Right cardiac atrium (tissue), 5 donors: ENCODE measurements at regions of chr20 and their contacts with region 1.

Region 1: GRCh38 chr20:43749734-43750294 is 23.0 kb upstream of the GTSF1L start:
- DNase-seq: peak; percentile 72 to 90 (median 90)
- ATAC-seq: peak; percentile 78 to 85
- H3K4me3 ChIP-seq: no peak overlapping the region
- H3K27ac ChIP-seq: no peak overlapping the region
- H3K4me1 ChIP-seq: no peaks in the 10 kb centered on the region
- H3K27me3 ChIP-seq: no peaks in the 10 kb centered on the region

Region 2: DNA sequence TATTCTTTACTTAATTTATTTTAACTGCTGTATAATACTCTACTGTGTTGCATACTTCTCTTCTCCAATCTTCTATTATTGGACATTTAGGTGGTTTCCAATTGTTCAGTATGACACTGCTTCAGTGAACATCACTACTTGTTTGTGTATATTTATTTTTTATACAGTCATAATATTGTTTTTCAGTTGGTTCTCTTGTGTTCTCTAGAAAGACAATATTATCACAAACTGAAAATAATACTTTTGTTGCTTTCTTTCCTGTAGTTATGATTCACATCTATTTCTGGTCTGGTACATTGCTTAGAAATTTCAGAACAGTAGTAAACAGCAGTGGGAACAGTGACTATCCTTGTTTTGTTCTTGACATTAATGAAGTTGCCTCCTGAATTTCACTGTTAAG is 39.8 kb after region 1 on chr20:
- intact Hi-C with region 1: no loop called
- DNase-seq: no peak
- ATAC-seq: no peak
- H3K4me3 ChIP-seq: no peak overlapping the region
- H3K27ac ChIP-seq: no peak overlapping the region
- H3K4me1 ChIP-seq: no peaks in the 10 kb centered on the region
- H3K27me3 ChIP-seq: no peaks in the 10 kb centered on the region

Region 3: GRCh38 chr20:43839793-43840199 is 90.0 kb after region 1 on chr20:
- intact Hi-C with region 1: loop called in 1 of 4 experiments (anchors 10 kb)
- DNase-seq: no peak
- ATAC-seq: no peak
- H3K4me3 ChIP-seq: no peak overlapping the region
- H3K27ac ChIP-seq: no peak overlapping the region
- H3K4me1 ChIP-seq: no peaks in the 10 kb centered on the region
- H3K27me3 ChIP-seq: no peaks in the 10 kb centered on the region

Region 4: DNA sequence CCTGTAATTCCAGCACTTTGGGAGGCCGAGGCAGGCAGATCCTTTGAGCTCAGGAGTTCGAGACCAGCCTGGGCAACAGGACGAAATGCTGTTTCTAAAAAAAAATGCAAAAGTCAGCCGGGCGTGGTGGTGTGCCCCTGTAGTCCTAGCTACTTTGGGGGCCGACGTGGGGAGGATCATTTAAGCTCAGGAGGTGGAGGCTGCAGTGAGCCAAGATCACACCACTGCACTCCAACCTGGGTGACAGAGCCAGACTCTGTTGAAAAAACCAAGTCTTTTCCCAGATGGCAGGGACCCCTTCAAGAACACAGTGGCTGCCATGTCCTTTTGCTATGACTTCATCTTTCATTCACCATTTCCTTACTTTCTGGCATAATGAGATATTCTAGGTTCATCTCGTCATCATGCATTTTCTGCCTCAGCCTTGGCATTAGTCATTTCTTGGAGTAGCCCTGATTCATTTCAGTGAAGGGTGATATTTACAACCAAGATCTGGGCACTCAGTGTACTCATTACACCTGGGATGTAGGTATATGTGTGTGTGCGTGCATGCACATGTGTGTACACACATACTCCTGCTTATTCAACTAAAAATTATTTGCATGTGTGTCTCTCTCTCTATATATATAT is 103.5 kb after region 1 on chr20:
- intact Hi-C with region 1: no loop called
- DNase-seq: no peak
- ATAC-seq: no peak
- H3K4me3 ChIP-seq: no peak overlapping the region
- H3K27ac ChIP-seq: no peak overlapping the region
- H3K4me1 ChIP-seq: no peaks in the 10 kb centered on the region
- H3K27me3 ChIP-seq: no peaks in the 10 kb centered on the region